AG04450 (cell line): ENCODE measurements at regions of chr11 and their contacts with region 1.

Region 1: DNA sequence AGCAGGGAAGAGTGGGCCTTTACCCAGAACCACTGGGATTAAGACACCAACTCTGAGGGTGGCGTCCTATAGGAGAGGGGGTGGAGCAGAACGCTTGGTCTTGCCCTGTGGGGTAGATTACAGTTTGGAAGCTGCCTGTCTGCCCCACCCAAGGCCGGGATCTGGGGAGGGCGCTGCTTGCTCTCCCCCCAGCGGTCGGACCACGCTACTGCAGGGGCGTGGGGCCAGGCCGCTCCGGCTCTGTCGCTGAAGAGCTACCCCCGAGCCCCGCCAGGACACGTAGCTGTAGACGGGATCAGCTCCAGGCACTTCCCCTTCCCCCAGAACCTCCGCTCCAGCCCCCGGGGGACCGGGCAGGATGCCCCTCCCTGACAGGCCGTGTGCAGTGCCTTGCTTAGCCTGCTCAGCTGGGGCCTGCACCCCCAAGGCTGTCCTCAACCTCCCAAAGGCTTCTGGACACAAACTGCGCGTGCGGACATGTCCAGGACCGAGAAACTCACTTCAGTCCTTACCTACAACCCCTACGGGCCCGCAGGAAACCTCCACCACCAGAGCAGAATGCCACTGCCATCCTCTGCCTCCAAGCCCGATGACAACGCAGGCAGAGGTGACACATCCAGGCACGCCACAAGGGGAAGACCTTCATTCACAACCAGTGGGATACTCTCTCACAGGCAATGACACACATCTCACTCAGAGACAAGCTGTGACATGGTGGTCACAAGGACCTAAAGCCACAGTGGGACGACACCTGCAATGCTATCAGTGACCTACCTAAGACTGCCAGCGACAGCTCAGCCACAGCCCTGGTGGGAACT is 3.6 kb downstream of the AHNAK start:
- DNase-seq: no peak
- H3K4me3 ChIP-seq: peak overlapping the region; percentile 98
- H3K27ac ChIP-seq: peak overlapping the region; percentile 39
- H3K27me3 ChIP-seq: no peaks in the 10 kb centered on the region
- CTCF ChIP-seq: peak; percentile 98

Region 2: GRCh38 chr11:62394825-62395538 is 148.0 kb before region 1 on chr11:
- CTCF ChIA-PET with region 1: interaction called, 89 read pairs
- POLR2A ChIA-PET with region 1: interaction called, 19 read pairs
- DNase-seq: peak; percentile 68
- H3K4me3 ChIP-seq: peak overlapping the region; percentile 53
- H3K27ac ChIP-seq: no peak overlapping the region
- H3K27me3 ChIP-seq: peaks cover 4% of the 10 kb centered on the region
- CTCF ChIP-seq: peak; percentile 67

Region 3: DNA sequence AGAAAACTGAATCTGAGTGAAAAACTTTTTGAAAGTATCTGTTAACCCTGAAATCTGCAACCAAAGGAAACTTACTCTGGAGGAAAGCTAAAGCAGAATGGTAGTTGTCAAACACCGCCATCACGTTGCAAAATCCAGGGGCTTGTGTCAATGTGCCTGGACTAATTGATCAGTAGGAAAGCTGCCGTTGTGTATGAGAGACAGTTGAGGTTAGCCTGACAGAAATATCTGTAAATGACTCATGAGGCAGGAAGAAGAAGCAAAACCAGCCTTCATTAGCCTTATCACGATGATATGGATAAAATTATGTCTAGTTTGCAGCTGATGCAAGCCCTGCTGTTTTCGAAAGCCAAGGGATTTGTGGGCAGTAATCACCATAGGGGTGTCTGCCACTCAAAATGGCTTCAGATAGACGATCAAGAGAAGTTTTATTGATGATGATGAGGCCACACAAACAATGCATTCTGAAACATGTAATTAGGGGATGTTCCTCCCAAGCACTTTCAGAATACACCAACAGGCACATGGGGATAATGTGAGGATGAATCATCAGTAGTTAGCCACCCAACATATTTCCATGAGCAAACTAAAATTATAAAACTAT is 115.2 kb before region 1 on chr11:
- CTCF ChIA-PET with region 1: interaction called, 137 read pairs
- POLR2A ChIA-PET with region 1: interaction called, 14 read pairs
- DNase-seq: no peak
- H3K4me3 ChIP-seq: no peak overlapping the region
- H3K27ac ChIP-seq: peak overlapping the region; percentile 80
- H3K27me3 ChIP-seq: no peaks in the 10 kb centered on the region
- CTCF ChIP-seq: no peak

Region 4: GRCh38 chr11:62497132-62497915 is 45.6 kb before region 1 on chr11:
- CTCF ChIA-PET with region 1: interaction called, 10 read pairs
- POLR2A ChIA-PET with region 1: interaction called, 3 read pairs
- DNase-seq: no peak
- H3K4me3 ChIP-seq: no peak overlapping the region
- H3K27ac ChIP-seq: no peak overlapping the region
- H3K27me3 ChIP-seq: no peaks in the 10 kb centered on the region
- CTCF ChIP-seq: no peak

Region 5: GRCh38 chr11:62556108-62556871 is 13.3 kb after region 1 on chr11:
- CTCF ChIA-PET with region 1: interaction called, 101 read pairs
- POLR2A ChIA-PET with region 1: interaction called, 28 read pairs
- DNase-seq: peak; percentile 86
- H3K4me3 ChIP-seq: peak overlapping the region; percentile 27
- H3K27ac ChIP-seq: peak overlapping the region; percentile 87
- H3K27me3 ChIP-seq: no peaks in the 10 kb centered on the region
- CTCF ChIP-seq: no peak

Region 6: GRCh38 chr11:62612366-62613290 is 69.7 kb after region 1 on chr11 and contains the starts of genes EML3 and ROM1:
- CTCF ChIA-PET with region 1: interaction called, 10 read pairs
- POLR2A ChIA-PET with region 1: interaction called, 3 read pairs
- DNase-seq: peak; percentile 37
- H3K4me3 ChIP-seq: peak within 1 kb of the TSS; percentile 79
- H3K27ac ChIP-seq: peak within 1 kb of the TSS; percentile 65
- H3K27me3 ChIP-seq: no peaks in the 10 kb centered on the region
- CTCF ChIP-seq: peak; percentile 71
- polyA plus RNA-seq, gene EML3: 17.1 and 18.6 TPM in 2 replicates
- polyA plus RNA-seq, gene ROM1: 1.4 and 2.0 TPM in 2 replicates